Naive thymus-derived CD4-positive, alpha-beta T cell (primary cell): ENCODE measurements at regions of chr1 and their contacts with region 1.

Region 1: DNA sequence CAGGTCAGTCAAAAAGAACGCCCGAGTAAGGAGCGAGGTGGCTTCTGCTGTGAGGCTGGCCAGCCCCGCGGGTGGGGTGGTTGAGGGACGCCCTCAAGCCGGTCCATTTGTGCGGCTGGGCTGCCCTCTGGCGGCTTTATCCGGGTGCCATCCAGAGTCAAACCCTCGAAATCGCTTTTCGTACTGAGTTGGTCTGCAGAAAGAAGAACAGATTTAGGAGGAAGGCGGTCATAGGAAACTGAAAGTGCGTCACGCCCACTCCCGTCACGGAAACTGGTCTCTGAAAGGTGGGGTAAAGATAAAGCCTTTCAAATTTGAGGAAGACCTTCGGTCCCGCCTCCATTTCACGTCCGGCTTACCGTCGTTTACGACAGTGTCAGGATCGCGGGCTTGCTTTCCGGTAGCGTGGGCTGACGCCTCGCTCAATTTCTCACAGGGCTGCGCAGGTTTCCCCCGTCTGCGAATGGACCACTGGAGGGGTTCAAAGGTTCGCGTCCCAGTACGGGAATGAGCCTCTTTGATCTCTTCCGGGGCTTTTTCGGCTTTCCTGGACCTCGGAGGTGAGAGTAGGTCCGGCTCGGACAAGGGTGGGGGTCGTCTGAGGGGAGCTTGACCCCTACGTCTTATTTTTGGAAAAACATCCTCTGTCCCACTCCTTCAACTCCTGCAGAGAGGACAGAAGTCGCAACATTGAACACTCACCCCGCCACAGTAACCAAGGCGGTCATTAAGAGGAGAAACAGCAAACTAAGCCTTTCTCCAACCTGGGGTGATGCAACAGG is at the start of gene HAX1:
- DNase-seq: peak; percentile 74 to 99 (median 97)
- ATAC-seq: peak; percentile 95
- H3K4me3 ChIP-seq: peak within 1 kb of the TSS; percentile 98
- H3K4me3 Mint-ChIP-seq: peak within 1 kb of the TSS; percentile 94 to 99 (median 97)
- H3K27ac ChIP-seq: peak within 1 kb of the TSS; percentile 92
- H3K27ac Mint-ChIP-seq: peak within 1 kb of the TSS; percentile 97 to 99 (median 99)
- H3K4me1 ChIP-seq: peaks cover 10 to 20% of the 10 kb centered on the region in 2 donors
- H3K4me1 Mint-ChIP-seq: peaks cover 20 to 47% (median 42%) of the 10 kb centered on the region in 7 donors
- H3K27me3 ChIP-seq: no peaks in the 10 kb centered on the region
- H3K27me3 Mint-ChIP-seq: no peaks in the 10 kb centered on the region
- total RNA-seq, gene HAX1: 71.9 to 111 (median 104) TPM

Region 2: GRCh38 chr1:153670859-153671627 is 601.4 kb before region 1 on chr1 and contains the start of gene ILF2:
- CTCF ChIA-PET with region 1: no interaction called
- POLR2A ChIA-PET with region 1: no interaction called
- intact Hi-C with region 1: loop called (anchors 2 to 5 kb)
- DNase-seq: peak; percentile 85 to 100 (median 98)
- ATAC-seq: peak; percentile 93
- H3K4me3 ChIP-seq: peak within 1 kb of the TSS; percentile 94
- H3K4me3 Mint-ChIP-seq: no peak within 1 kb of the TSS
- H3K27ac ChIP-seq: peak within 1 kb of the TSS; percentile 93
- H3K27ac Mint-ChIP-seq: peak within 1 kb of the TSS in 2 of 9 donors; percentile 62 to 73
- H3K4me1 ChIP-seq: peaks cover 18 to 19% of the 10 kb centered on the region in 2 donors
- H3K4me1 Mint-ChIP-seq: peaks cover 11 to 28% (median 17%) of the 10 kb centered on the region in 7 donors
- H3K27me3 ChIP-seq: no peaks in the 10 kb centered on the region
- H3K27me3 Mint-ChIP-seq: peaks cover 0 to under 1% (median 0%) of the 10 kb centered on the region in 5 donors
- total RNA-seq, gene ILF2: 83.6 to 177 (median 113) TPM

Region 3: DNA sequence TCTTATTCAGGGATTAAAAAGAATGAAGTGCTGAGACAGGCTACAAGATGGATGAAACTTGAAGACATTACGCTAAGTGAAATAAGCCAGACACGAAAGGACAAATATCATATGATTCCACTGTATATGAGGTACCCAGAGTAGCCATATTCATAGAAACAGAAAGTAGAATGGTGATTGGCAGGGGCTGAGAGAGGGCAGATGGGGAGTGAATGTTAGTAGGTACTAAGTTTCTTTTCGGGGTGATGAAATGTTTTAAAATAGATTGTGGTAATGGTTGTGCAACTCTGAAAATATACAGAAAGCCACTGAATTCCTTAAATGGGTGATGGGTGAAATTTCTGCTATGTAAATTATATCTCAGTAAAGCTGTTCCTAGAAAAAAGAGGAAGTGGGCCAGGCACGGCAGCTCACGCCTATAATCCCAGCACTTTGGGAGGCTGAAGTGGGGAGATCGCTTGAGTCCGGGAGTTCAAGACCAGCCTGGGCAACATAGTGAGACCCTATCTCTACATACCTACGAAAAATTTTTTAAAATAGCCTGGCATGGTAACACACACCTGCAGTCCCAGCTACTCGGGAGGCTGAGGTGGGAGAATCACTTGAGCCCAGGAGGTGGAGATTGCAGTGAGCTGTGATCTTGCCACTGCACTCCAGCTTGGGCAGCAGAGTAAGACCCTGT is 481.3 kb before region 1 on chr1:
- CTCF ChIA-PET with region 1: no interaction called
- POLR2A ChIA-PET with region 1: no interaction called
- intact Hi-C with region 1: loop called in 1 of 2 experiments (anchors 2 kb)
- DNase-seq: peak in 1 of 9 donors; percentile 30
- ATAC-seq: peak; percentile 92
- H3K4me3 ChIP-seq: no peak overlapping the region
- H3K4me3 Mint-ChIP-seq: peak overlapping the region in 4 of 10 donors; percentile 0 to 70 (median 26)
- H3K27ac ChIP-seq: no peak overlapping the region
- H3K27ac Mint-ChIP-seq: peak overlapping the region in 3 of 9 donors; percentile 14 to 84 (median 14)
- H3K4me1 ChIP-seq: no peaks in the 10 kb centered on the region
- H3K4me1 Mint-ChIP-seq: peaks cover 0 to 31% (median 20%) of the 10 kb centered on the region in 7 donors
- H3K27me3 ChIP-seq: no peaks in the 10 kb centered on the region
- H3K27me3 Mint-ChIP-seq: peaks cover 0 to 8% (median 6%) of the 10 kb centered on the region in 5 donors

Region 4: GRCh38 chr1:153958111-153958960 is 314.1 kb before region 1 on chr1 and contains the start of gene CRTC2:
- CTCF ChIA-PET with region 1: no interaction called
- POLR2A ChIA-PET with region 1: no interaction called
- intact Hi-C with region 1: loop called (anchors 1 to 2 kb)
- DNase-seq: peak; percentile 86 to 99 (median 96)
- ATAC-seq: peak; percentile 94
- H3K4me3 ChIP-seq: peak within 1 kb of the TSS; percentile 74
- H3K4me3 Mint-ChIP-seq: peak within 1 kb of the TSS; percentile 91 to 100 (median 97)
- H3K27ac ChIP-seq: peak within 1 kb of the TSS; percentile 92
- H3K27ac Mint-ChIP-seq: peak within 1 kb of the TSS; percentile 89 to 98 (median 94)
- H3K4me1 ChIP-seq: peaks cover 36% of the 10 kb centered on the region in 2 donors
- H3K4me1 Mint-ChIP-seq: peaks cover 34 to 71% (median 67%) of the 10 kb centered on the region in 7 donors
- H3K27me3 ChIP-seq: no peaks in the 10 kb centered on the region
- H3K27me3 Mint-ChIP-seq: no peaks in the 10 kb centered on the region
- total RNA-seq, gene CRTC2: 86.1 to 157 (median 119) TPM

Region 5: GRCh38 chr1:154183045-154183915 is 89.1 kb before region 1 on chr1:
- CTCF ChIA-PET with region 1: no interaction called
- POLR2A ChIA-PET with region 1: interaction called, 3 read pairs
- intact Hi-C with region 1: loop called (anchors 1 kb)
- DNase-seq: peak; percentile 84 to 94 (median 94)
- ATAC-seq: peak; percentile 89
- H3K4me3 ChIP-seq: peak overlapping the region; percentile 93
- H3K4me3 Mint-ChIP-seq: peak overlapping the region; percentile 98 to 100 (median 100)
- H3K27ac ChIP-seq: peak overlapping the region; percentile 95
- H3K27ac Mint-ChIP-seq: peak overlapping the region; percentile 98 to 100 (median 99)
- H3K4me1 ChIP-seq: peaks cover 25 to 44% of the 10 kb centered on the region in 2 donors
- H3K4me1 Mint-ChIP-seq: peaks cover 44 to 49% (median 48%) of the 10 kb centered on the region in 7 donors
- H3K27me3 ChIP-seq: no peaks in the 10 kb centered on the region
- H3K27me3 Mint-ChIP-seq: peaks cover 0 to 7% (median 0%) of the 10 kb centered on the region in 5 donors

Region 6: GRCh38 chr1:154335025-154335714 is 62.8 kb after region 1 on chr1:
- CTCF ChIA-PET with region 1: interaction called, 28 read pairs
- POLR2A ChIA-PET with region 1: interaction called, 11 read pairs
- intact Hi-C with region 1: loop called (anchors 1 kb)
- DNase-seq: peak; percentile 74 to 91 (median 87)
- ATAC-seq: peak; percentile 99
- H3K4me3 ChIP-seq: peak overlapping the region; percentile 23
- H3K4me3 Mint-ChIP-seq: peak overlapping the region; percentile 60 to 85 (median 72)
- H3K27ac ChIP-seq: peak overlapping the region; percentile 68
- H3K27ac Mint-ChIP-seq: peak overlapping the region; percentile 87 to 97 (median 95)
- H3K4me1 ChIP-seq: peaks cover 73% of the 10 kb centered on the region in 2 donors
- H3K4me1 Mint-ChIP-seq: peaks cover 50 to 88% (median 77%) of the 10 kb centered on the region in 7 donors
- H3K27me3 ChIP-seq: no peaks in the 10 kb centered on the region
- H3K27me3 Mint-ChIP-seq: no peaks in the 10 kb centered on the region

Region 7: GRCh38 chr1:155050560-155051341 is 778.3 kb after region 1 on chr1 and contains the start of gene ADAM15:
- CTCF ChIA-PET with region 1: no interaction called
- POLR2A ChIA-PET with region 1: no interaction called
- intact Hi-C with region 1: loop called in 1 of 2 experiments (anchors 5 kb)
- DNase-seq: peak; percentile 56 to 88 (median 74)
- ATAC-seq: peak; percentile 90
- H3K4me3 ChIP-seq: peak within 1 kb of the TSS; percentile 66
- H3K4me3 Mint-ChIP-seq: peak within 1 kb of the TSS; percentile 74 to 91 (median 88)
- H3K27ac ChIP-seq: peak within 1 kb of the TSS; percentile 72
- H3K27ac Mint-ChIP-seq: peak within 1 kb of the TSS in 8 of 9 donors; percentile 47 to 85 (median 70)
- H3K4me1 ChIP-seq: peaks cover 5 to 13% of the 10 kb centered on the region in 2 donors
- H3K4me1 Mint-ChIP-seq: peaks cover 14 to 31% (median 23%) of the 10 kb centered on the region in 7 donors
- H3K27me3 ChIP-seq: no peaks in the 10 kb centered on the region
- H3K27me3 Mint-ChIP-seq: no peaks in the 10 kb centered on the region
- total RNA-seq, gene ADAM15: 16.9 to 53.7 (median 28.8) TPM